ENCODE measurements at regions of chr17 and their contacts with region 1.

Region 1: GRCh38 chr17:10754109-10754508 is 24.3 kb upstream of the TMEM220 start:
- DNase-seq: no peak
- H3K4me3 ChIP-seq: no peak overlapping the region
- H3K27ac ChIP-seq: no peak overlapping the region
- H3K4me1 ChIP-seq: peaks cover 0 to 3% of the 10 kb centered on the region in 2 donors
- H3K27me3 ChIP-seq: no peaks in the 10 kb centered on the region
- CTCF ChIP-seq: peak in 1 of 3 donors; percentile 19
- POLR2A ChIP-seq: no peak

Region 2: GRCh38 chr17:10482252-10482651 is 271.9 kb before region 1 on chr17:
- intact Hi-C with region 1: no loop called
- DNase-seq: no peak
- H3K4me3 ChIP-seq: no peak overlapping the region
- H3K27ac ChIP-seq: no peak overlapping the region
- H3K4me1 ChIP-seq: no peaks in the 10 kb centered on the region
- H3K27me3 ChIP-seq: no peaks in the 10 kb centered on the region
- CTCF ChIP-seq: no peak
- POLR2A ChIP-seq: no peak

Region 3: GRCh38 chr17:10836966-10837590 is 83.0 kb after region 1 on chr17:
- intact Hi-C with region 1: loop called (anchors 5 kb)
- DNase-seq: no peak
- H3K4me3 ChIP-seq: no peak overlapping the region
- H3K27ac ChIP-seq: no peak overlapping the region
- H3K4me1 ChIP-seq: no peaks in the 10 kb centered on the region
- H3K27me3 ChIP-seq: no peaks in the 10 kb centered on the region
- CTCF ChIP-seq: no peak
- POLR2A ChIP-seq: no peak

Region 4: DNA sequence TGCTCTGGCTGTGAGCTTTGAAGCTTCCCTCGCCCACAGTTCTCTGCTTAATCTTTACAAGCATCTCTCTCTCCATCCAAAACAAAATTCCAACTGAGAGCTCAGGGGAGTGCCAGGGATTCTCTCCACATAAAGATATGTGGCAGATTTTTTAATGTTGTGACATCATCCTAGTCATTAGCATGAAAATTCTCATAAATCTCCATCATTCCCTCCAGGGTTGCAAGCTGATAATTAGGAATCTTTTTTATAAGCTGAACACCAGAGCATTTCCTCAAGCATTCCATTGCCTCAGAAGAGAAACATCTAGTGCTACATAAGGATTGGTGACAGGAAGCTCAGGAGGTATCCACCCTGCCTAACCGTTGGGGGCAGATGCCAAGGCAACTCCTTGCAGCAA is 761.8 kb after region 1 on chr17:
- intact Hi-C with region 1: no loop called
- DNase-seq: no peak
- H3K4me3 ChIP-seq: no peak overlapping the region
- H3K27ac ChIP-seq: no peak overlapping the region
- H3K4me1 ChIP-seq: no peaks in the 10 kb centered on the region
- H3K27me3 ChIP-seq: no peaks in the 10 kb centered on the region
- CTCF ChIP-seq: no peak
- POLR2A ChIP-seq: no peak

Region 5: DNA sequence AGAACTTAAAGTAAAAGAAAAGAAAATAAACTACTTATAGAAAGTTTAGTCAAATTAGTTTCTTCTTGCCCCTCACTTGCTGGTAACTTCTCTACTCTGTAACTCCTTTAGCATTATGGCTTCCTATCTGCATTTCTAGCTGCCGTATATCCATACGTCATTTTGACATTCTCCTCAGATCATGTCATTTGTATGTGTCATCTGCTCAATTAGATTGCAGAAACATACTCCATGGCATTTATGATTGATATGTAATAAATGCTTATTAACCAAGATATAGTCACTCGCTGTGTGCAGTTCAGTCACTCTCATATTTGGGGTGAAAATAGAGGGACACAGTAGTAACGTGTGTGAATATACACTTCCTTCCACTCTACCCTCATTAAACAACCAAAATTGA is 1139.8 kb after region 1 on chr17:
- intact Hi-C with region 1: loop called (anchors 5 kb)
- DNase-seq: no peak
- H3K4me3 ChIP-seq: no peak overlapping the region
- H3K27ac ChIP-seq: no peak overlapping the region
- H3K4me1 ChIP-seq: no peaks in the 10 kb centered on the region
- H3K27me3 ChIP-seq: no peaks in the 10 kb centered on the region
- CTCF ChIP-seq: no peak
- POLR2A ChIP-seq: no peak